ENCODE measurements at regions of chr11 and their contacts with region 1.

Region 1: GRCh38 chr11:65637794-65638317 is at the start of gene SIPA1:
- DNase-seq: peak; percentile 86 to 94
- H3K4me3 ChIP-seq: peak within 1 kb of the TSS; percentile 57
- H3K27ac ChIP-seq: peak within 1 kb of the TSS; percentile 18
- H3K4me1 ChIP-seq: peaks cover 17% of the 10 kb centered on the region
- H3K27me3 ChIP-seq: no peaks in the 10 kb centered on the region
- CTCF ChIP-seq: peak; percentile 68
- total RNA-seq, gene SIPA1: 65.6 and 81.3 TPM in 2 replicates

Region 2: DNA sequence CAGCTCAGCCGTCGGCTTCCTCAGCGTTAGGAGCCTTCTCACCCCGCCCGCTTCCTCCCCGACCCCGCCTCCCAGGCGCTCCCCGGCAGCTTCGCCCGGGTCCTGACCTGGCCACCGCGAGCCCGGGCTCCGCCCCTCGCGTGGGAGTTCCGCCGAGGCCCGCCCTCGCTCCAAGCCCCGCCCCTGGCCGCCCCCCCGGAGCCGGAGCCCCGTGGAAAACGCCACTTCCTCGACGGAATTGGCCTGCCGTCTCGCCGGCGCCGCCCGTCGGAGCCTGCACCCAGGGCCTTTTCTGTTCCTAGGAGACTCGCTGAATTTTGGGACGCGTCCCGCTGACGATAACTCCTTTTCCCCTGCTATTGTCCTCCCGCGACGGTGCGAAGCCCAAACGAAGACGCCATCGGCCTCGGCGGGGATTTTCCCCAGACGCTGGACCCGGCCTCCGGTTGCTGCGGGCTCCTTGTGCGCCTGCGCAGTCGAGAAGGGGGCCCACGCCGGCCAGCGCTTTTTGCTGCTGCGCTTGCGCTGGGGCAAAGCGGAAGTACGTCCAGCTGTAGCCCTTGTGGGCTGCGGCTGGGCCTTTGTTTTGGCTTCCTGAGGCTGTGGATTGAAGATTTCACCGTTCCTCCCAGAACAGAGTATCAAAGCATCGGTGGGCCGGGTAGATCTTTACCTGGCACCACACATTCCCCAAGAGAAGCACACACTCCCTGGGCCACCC is 14.8 kb after region 1 on chr11:
- CTCF ChIA-PET with region 1: no interaction called
- POLR2A ChIA-PET with region 1: interaction called, 6 read pairs
- intact Hi-C with region 1: loop called (anchors 2 kb)
- DNase-seq: peak; percentile 82 to 98
- H3K4me3 ChIP-seq: peak overlapping the region; percentile 64
- H3K27ac ChIP-seq: peak overlapping the region; percentile 76
- H3K4me1 ChIP-seq: peaks cover 35% of the 10 kb centered on the region
- H3K27me3 ChIP-seq: no peaks in the 10 kb centered on the region
- CTCF ChIP-seq: no peak

Region 3: GRCh38 chr11:65662799-65663638 is 25.2 kb after region 1 on chr11 and contains the start of gene RELA:
- CTCF ChIA-PET with region 1: no interaction called
- POLR2A ChIA-PET with region 1: no interaction called
- intact Hi-C with region 1: loop called (anchors 1 kb)
- DNase-seq: peak; percentile 76 to 98
- H3K4me3 ChIP-seq: peak within 1 kb of the TSS; percentile 99
- H3K27ac ChIP-seq: peak within 1 kb of the TSS; percentile 80
- H3K4me1 ChIP-seq: peaks cover 20% of the 10 kb centered on the region
- H3K27me3 ChIP-seq: no peaks in the 10 kb centered on the region
- CTCF ChIP-seq: no peak
- total RNA-seq, gene RELA: 59.5 and 86.8 TPM in 2 replicates

Region 4: DNA sequence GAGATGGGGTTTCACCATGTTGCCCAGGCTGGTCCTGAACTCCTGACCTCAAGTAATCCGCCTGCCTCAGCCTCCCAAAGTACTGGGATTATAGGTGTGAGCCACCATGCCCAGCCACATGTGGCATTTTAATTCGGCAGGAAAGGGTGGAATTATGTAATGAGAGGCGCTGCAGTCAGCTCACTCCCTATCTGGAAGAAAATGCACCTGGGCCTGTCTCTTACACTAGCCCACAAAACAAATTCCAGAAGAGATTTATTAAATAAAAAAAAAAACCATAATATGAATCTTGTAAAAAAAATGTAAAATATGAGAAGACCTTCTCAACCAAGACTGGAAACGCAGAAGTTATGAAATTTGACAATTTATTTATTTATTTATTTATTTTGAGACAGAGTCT is 66.0 kb after region 1 on chr11:
- CTCF ChIA-PET with region 1: interaction called, 10 read pairs
- POLR2A ChIA-PET with region 1: no interaction called
- intact Hi-C with region 1: no loop called
- DNase-seq: no peak
- H3K4me3 ChIP-seq: no peak overlapping the region
- H3K27ac ChIP-seq: no peak overlapping the region
- H3K4me1 ChIP-seq: no peaks in the 10 kb centered on the region
- H3K27me3 ChIP-seq: peaks cover 21% of the 10 kb centered on the region; the same call in 1 of the 2 replicates
- CTCF ChIP-seq: no peak